Transverse colon (tissue), 4 donors: ENCODE measurements at regions of chr4 and their contacts with region 1.

Region 1: GRCh38 chr4:87375719-87376291 is 15.2 kb downstream of the HSD17B11 start:
- DNase-seq: no peak
- H3K4me3 ChIP-seq: no peak overlapping the region
- H3K27ac ChIP-seq: peak overlapping the region; percentile 4 to 52 (median 26)
- H3K4me1 ChIP-seq: peaks cover 0 to 23% (median 0%) of the 10 kb centered on the region in 4 donors
- H3K27me3 ChIP-seq: no peaks in the 10 kb centered on the region
- CTCF ChIP-seq: peak; percentile 69 to 83 (median 76)
- EP300 ChIP-seq: no peak
- POLR2A ChIP-seq: no peak

Region 2: GRCh38 chr4:86664959-86665358 is 710.8 kb before region 1 on chr4:
- in situ Hi-C with region 1: no loop called
- intact Hi-C with region 1: no loop called
- DNase-seq: no peak
- H3K4me3 ChIP-seq: no peak overlapping the region
- H3K27ac ChIP-seq: no peak overlapping the region
- H3K4me1 ChIP-seq: no peaks in the 10 kb centered on the region
- H3K27me3 ChIP-seq: no peaks in the 10 kb centered on the region
- CTCF ChIP-seq: no peak
- EP300 ChIP-seq: no peak
- POLR2A ChIP-seq: no peak

Region 3: GRCh38 chr4:87451537-87451936 is 75.7 kb after region 1 on chr4:
- in situ Hi-C with region 1: loop called in 1 of 4 experiments (anchors 10 kb)
- intact Hi-C with region 1: loop called (anchors 5 kb)
- DNase-seq: no peak
- H3K4me3 ChIP-seq: no peak overlapping the region
- H3K27ac ChIP-seq: no peak overlapping the region
- H3K4me1 ChIP-seq: no peaks in the 10 kb centered on the region
- H3K27me3 ChIP-seq: no peaks in the 10 kb centered on the region
- CTCF ChIP-seq: no peak
- EP300 ChIP-seq: no peak
- POLR2A ChIP-seq: no peak

Region 4: GRCh38 chr4:87458913-87459312 is 83.1 kb after region 1 on chr4:
- in situ Hi-C with region 1: loop called (anchors 5 to 10 kb)
- intact Hi-C with region 1: loop called (anchors 5 kb)
- DNase-seq: no peak
- H3K4me3 ChIP-seq: no peak overlapping the region
- H3K27ac ChIP-seq: no peak overlapping the region
- H3K4me1 ChIP-seq: peaks cover 0 to 4% (median 0%) of the 10 kb centered on the region in 4 donors
- H3K27me3 ChIP-seq: no peaks in the 10 kb centered on the region
- CTCF ChIP-seq: no peak
- EP300 ChIP-seq: no peak
- POLR2A ChIP-seq: no peak